ENCODE measurements at regions of chr3 and their contacts with region 1.

Region 1: GRCh38 chr3:151227807-151228665 is 25.0 kb upstream of the GPR171 start:
- DNase-seq: peak; percentile 69 to 91
- ATAC-seq: peak; percentile 80 to 88 (median 82)
- H3K4me3 ChIP-seq: no peak overlapping the region
- H3K4me3 Mint-ChIP-seq: no peak overlapping the region
- H3K27ac ChIP-seq: peak overlapping the region; percentile 6
- H3K27ac Mint-ChIP-seq: peak overlapping the region; percentile 25 to 28
- H3K4me1 ChIP-seq: peaks cover 26% of the 10 kb centered on the region
- H3K4me1 Mint-ChIP-seq: peaks cover 50 to 52% of the 10 kb centered on the region in 2 donors
- H3K27me3 ChIP-seq: no peaks in the 10 kb centered on the region
- H3K27me3 Mint-ChIP-seq: peaks cover 0 to 2% of the 10 kb centered on the region in 2 donors
- CTCF ChIP-seq: peak; percentile 94

Region 2: DNA sequence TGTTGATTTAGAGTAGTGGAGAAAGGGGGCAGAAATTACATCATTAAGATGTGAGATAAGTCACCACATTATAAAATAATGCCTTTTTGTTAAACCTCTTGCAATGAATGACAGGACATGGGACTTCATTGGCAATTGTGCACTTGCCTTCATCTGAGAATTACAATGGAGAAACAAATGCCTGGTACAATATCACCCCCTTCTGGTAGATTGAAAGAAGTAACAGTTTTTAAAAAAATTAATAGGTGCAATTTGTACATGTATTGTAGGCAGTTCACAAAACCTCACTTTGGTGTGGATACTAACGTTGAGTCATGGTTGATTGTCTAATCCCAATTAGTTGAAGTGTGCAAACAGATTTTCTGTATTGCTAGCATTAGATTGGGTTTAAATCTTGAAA is 54.9 kb after region 1 on chr3:
- intact Hi-C with region 1: loop called (anchors 1 kb)
- DNase-seq: peak in 1 of 2 donors; percentile 81
- ATAC-seq: peak; percentile 71 to 82 (median 77)
- H3K4me3 ChIP-seq: no peak overlapping the region
- H3K4me3 Mint-ChIP-seq: no peak overlapping the region
- H3K27ac ChIP-seq: no peak overlapping the region
- H3K27ac Mint-ChIP-seq: no peak overlapping the region
- H3K4me1 ChIP-seq: peaks cover 3% of the 10 kb centered on the region
- H3K4me1 Mint-ChIP-seq: peaks cover 8 to 11% of the 10 kb centered on the region in 2 donors
- H3K27me3 ChIP-seq: no peaks in the 10 kb centered on the region
- H3K27me3 Mint-ChIP-seq: peaks cover 0 to 2% of the 10 kb centered on the region in 2 donors
- CTCF ChIP-seq: peak; percentile 80

Region 3: GRCh38 chr3:151686257-151686656 is 458.2 kb after region 1 on chr3:
- intact Hi-C with region 1: no loop called
- DNase-seq: no peak
- ATAC-seq: no peak
- H3K4me3 ChIP-seq: no peak overlapping the region
- H3K4me3 Mint-ChIP-seq: no peak overlapping the region
- H3K27ac ChIP-seq: no peak overlapping the region
- H3K27ac Mint-ChIP-seq: no peak overlapping the region
- H3K4me1 ChIP-seq: no peaks in the 10 kb centered on the region
- H3K4me1 Mint-ChIP-seq: no peaks in the 10 kb centered on the region
- H3K27me3 ChIP-seq: no peaks in the 10 kb centered on the region
- H3K27me3 Mint-ChIP-seq: no peaks in the 10 kb centered on the region
- CTCF ChIP-seq: no peak